Gastrocnemius medialis (tissue), 4 donors: ENCODE measurements at regions of chr6 and their contacts with region 1.

Region 1: DNA sequence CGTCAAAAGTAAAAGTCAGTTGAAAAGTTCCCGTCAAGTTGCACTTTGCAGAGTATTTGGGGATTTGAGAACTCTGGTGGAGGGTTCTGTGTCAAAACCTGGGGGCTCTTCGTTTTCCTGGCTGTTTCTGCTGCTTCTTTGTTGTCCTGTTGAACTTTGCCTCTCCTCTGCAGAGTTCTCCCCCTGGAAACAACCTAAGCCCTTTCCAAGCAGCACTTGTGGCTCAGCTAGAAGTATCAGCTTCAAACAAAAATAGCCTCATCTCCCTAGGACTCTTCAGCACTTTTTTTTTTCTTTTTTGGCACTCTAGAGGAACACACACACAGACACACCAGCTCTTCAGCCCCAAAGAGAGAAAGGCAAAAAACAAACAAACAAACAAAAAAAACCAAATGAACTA is at the start of gene TRDN:
- DNase-seq: peak; percentile 52 to 74
- ATAC-seq: peak; percentile 76 to 84
- H3K4me3 ChIP-seq: peak within 1 kb of the TSS; percentile 46 to 62 (median 57)
- H3K27ac ChIP-seq: peak within 1 kb of the TSS; percentile 89 to 97 (median 92)
- H3K4me1 ChIP-seq: peaks cover 30 to 52% of the 10 kb centered on the region in 2 donors
- H3K27me3 ChIP-seq: no peaks in the 10 kb centered on the region
- CTCF ChIP-seq: no peak
- POLR2A ChIP-seq: peak in 1 of 2 donors; percentile 78
- total RNA-seq, gene TRDN: 190 to 628 (median 296) TPM

Region 2: DNA sequence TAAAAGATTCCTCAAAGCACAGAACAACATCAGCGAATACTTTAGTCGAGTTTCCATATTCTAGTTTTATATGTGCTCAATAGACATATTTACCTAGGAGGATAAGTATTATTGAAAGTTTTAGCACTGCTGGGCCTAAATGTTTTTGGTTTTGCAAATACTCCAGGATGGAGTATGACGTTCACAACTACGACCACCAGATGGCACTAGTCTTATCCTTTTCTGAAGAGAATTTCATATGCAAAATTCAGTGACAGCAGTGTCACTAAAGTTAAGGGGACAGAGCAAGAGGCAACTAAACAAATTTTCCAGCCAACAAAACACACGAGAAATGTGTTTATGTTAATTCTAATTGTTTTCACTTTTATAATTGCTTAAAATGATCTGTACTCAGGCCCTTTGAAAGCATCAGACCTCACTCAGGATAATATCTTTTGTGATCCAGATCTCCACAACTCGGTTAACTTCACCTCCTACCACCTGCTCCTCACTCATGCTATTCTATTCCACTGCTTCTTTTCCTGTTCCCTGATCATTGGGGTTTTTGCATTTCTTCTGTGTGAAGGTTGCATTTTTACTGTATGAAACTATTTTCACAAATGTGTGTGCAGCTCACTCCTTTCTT is 220.8 kb before region 1 on chr6:
- in situ Hi-C with region 1: no loop called
- intact Hi-C with region 1: loop called (anchors 2 kb)
- DNase-seq: peak; percentile 26 to 64
- ATAC-seq: peak; percentile 62 to 78
- H3K4me3 ChIP-seq: no peak overlapping the region
- H3K27ac ChIP-seq: peak overlapping the region; percentile 45 to 76 (median 63)
- H3K4me1 ChIP-seq: peaks cover 55 to 87% of the 10 kb centered on the region in 2 donors
- H3K27me3 ChIP-seq: no peaks in the 10 kb centered on the region
- CTCF ChIP-seq: peak; percentile 69 to 83 (median 78)
- POLR2A ChIP-seq: no peak

Region 3: GRCh38 chr6:123986938-123987337 is 350.2 kb after region 1 on chr6:
- in situ Hi-C with region 1: no loop called
- intact Hi-C with region 1: no loop called
- DNase-seq: no peak
- ATAC-seq: no peak
- H3K4me3 ChIP-seq: no peak overlapping the region
- H3K27ac ChIP-seq: no peak overlapping the region
- H3K4me1 ChIP-seq: peaks cover 0 to 4% of the 10 kb centered on the region in 2 donors
- H3K27me3 ChIP-seq: no peaks in the 10 kb centered on the region
- CTCF ChIP-seq: no peak
- POLR2A ChIP-seq: no peak